Activated T-helper 2 cell treated with anti-CD3 and anti-CD28 coated beads, Interferon-gamma antibody, Interleukin-2, Interleukin-4, amounts not matched to agents 10 μg/mL and 5 μg/mL and 100 μg/mL, durations not matched to agents 14 hours and 24 hours and 36 hours (primary cell): ENCODE measurements at regions of chr20 and their contacts with region 1.

Region 1: DNA sequence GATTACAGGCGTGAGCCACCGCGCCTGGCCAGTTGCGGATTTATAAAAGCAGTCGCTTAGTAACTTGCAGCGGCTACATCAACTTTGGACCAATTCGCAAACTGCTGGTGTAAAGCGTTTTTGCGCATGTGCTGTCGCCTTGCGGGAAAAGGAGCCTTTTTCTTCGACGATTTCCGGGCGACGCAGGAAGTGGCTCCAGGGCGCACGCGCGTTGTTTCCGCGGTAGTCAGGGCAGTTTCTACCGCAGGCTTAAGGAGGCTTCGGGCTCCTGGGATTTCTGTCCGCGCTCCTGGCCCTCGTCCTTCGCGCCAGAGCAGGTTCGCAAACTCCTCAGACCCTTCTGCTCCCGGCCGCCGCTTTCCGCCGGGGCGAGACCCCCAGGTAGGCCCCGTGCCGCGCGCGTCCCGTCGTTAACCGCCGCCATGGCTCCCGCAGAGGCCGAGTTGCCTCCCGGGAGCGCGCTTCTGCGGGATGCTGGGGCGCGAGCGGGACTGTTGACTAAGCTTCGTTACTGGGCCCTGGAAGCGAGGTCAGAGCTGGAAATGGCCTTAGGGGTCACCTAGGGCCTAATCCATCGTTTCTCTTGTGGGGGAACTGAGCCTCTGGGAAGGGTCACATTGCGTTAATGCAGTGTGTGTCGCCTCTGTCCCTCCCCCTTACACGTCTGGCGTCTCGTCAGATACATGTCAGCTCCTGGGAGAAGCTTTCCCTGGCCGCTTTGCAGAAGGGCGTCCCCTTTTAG is at the start of gene RAE1:
- DNase-seq: peak; percentile 89
- H3K4me3 Mint-ChIP-seq: peak within 1 kb of the TSS; percentile 93
- H3K27ac Mint-ChIP-seq: peak within 1 kb of the TSS; percentile 93
- H3K4me1 Mint-ChIP-seq: peaks cover 24% of the 10 kb centered on the region
- H3K27me3 Mint-ChIP-seq: peaks cover 8% of the 10 kb centered on the region
- total RNA-seq, gene RAE1: 46.8 and 48.1 TPM in 2 replicates

Region 2: DNA sequence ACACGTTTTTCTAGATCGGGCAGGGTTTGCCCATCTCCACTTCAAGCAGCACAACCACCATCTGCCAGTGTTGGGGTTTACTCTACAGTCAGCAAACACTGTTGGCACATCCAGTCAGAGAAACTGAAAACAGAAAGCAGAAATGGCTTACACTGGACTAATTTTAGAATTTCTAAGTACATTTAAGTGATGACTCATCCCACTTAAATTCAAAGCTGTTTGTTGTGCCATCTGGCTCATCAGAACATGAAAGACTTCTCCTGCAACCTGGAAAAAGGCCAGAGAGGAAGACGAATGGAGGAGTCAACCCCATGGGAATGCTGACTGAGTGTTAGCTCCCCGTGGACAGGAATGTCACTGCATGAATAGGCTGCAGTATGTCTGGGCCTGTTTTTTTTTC is 796.3 kb before region 1 on chr20:
- intact Hi-C with region 1: loop called (anchors 10 kb)
- DNase-seq: no peak
- H3K4me3 Mint-ChIP-seq: no peak overlapping the region
- H3K27ac Mint-ChIP-seq: no peak overlapping the region
- H3K4me1 Mint-ChIP-seq: peaks cover 8% of the 10 kb centered on the region
- H3K27me3 Mint-ChIP-seq: peaks cover 3% of the 10 kb centered on the region

Region 3: DNA sequence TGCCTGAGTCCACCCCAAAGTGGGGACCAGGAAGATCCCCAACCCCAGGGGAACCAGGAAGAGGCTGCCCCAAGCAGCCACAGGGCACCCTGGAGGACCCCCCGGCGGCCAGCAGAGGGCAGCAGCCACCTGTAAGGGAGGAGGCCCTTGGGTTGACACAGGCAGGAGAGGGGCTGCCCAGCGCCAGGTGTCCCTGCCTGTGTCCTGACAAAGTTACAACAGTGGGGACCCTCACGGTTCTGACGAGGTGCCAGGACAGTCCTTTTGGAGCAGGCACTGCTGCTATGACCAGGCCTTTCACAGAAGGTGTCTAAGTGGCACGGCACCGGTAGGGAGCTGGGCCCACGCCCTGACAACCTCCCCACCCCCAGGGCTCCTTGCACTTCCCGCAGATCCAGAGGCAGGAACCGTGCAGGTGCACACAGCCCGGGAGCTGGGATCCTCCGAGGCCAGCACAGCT is 261.5 kb before region 1 on chr20:
- intact Hi-C with region 1: loop called (anchors 1 kb)
- DNase-seq: peak; percentile 47
- H3K4me3 Mint-ChIP-seq: no peak overlapping the region
- H3K27ac Mint-ChIP-seq: no peak overlapping the region
- H3K4me1 Mint-ChIP-seq: peaks cover 10% of the 10 kb centered on the region
- H3K27me3 Mint-ChIP-seq: peaks cover 3% of the 10 kb centered on the region

Region 4: DNA sequence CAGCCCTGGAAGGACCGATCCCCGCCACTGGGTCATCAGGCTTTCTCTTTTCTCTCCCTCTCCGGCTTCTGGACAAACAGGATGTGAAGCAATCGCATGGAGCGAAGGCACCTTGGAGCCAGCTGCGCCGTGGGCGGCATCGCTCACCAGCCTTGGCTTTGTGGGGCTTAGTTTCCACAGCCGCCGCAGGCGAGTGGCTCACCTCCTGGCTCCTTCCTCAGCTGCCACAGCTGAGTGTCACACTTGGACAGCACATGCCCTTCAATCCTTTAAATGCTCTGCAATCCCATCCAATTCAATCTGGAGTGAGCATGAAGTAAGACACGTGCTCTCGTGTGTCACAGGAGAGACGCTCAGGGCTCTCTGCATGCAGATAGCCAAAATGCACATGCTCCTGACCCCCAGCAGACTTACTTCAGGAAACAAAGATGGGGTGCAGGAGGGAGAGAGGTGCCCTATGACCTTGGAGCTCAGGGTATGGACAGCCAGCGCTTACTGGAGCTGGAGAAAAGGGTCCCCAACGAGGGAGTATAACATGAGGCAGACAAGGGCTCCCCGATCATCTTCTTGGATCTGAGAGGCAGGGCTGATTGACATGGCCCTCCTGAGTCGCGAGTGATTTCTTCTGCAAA is 155.6 kb before region 1 on chr20:
- intact Hi-C with region 1: no loop called
- DNase-seq: no peak
- H3K4me3 Mint-ChIP-seq: no peak overlapping the region
- H3K27ac Mint-ChIP-seq: no peak overlapping the region
- H3K4me1 Mint-ChIP-seq: no peaks in the 10 kb centered on the region
- H3K27me3 Mint-ChIP-seq: no peaks in the 10 kb centered on the region

Region 5: GRCh38 chr20:57361212-57361915 is 10.2 kb after region 1 on chr20:
- intact Hi-C with region 1: no loop called
- DNase-seq: no peak
- H3K4me3 Mint-ChIP-seq: no peak overlapping the region
- H3K27ac Mint-ChIP-seq: no peak overlapping the region
- H3K4me1 Mint-ChIP-seq: peaks cover 2% of the 10 kb centered on the region
- H3K27me3 Mint-ChIP-seq: no peaks in the 10 kb centered on the region

Region 6: GRCh38 chr20:57383447-57384347 is 32.5 kb after region 1 on chr20:
- intact Hi-C with region 1: loop called (anchors 2 kb)
- DNase-seq: no peak
- H3K4me3 Mint-ChIP-seq: no peak overlapping the region
- H3K27ac Mint-ChIP-seq: no peak overlapping the region
- H3K4me1 Mint-ChIP-seq: peaks cover 35% of the 10 kb centered on the region
- H3K27me3 Mint-ChIP-seq: no peaks in the 10 kb centered on the region

Region 7: DNA sequence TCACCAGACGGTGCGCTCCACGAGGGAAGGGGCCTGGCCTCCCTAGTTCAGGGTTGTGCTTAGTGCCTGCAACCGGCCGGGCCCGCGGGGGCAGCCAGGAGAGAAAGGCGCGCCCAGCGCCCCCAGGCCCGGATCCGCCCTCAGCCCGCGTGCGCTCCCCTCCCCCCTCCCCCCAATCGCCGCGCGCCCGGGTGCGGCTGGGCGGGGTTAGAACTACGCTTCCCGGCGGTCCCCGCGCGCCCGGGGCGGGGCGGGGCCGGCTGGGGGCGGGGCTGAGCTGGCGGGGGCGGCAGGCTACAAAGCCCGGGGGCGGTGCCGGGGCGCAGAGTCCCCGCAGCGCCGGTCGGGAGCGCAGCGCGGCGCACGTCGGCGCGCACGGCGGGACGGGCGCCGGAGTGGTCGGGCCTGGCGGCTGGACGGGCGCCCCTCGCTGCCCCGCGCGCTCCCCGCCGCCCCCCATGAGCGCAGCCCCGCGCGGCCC is 39.9 kb after region 1 on chr20 and contains the start of gene RBM38:
- intact Hi-C with region 1: loop called (anchors 1 kb)
- DNase-seq: peak; percentile 74
- H3K4me3 Mint-ChIP-seq: peak within 1 kb of the TSS; percentile 91
- H3K27ac Mint-ChIP-seq: peak within 1 kb of the TSS; percentile 98
- H3K4me1 Mint-ChIP-seq: peaks cover 30% of the 10 kb centered on the region
- H3K27me3 Mint-ChIP-seq: no peaks in the 10 kb centered on the region
- total RNA-seq, gene RBM38: 88.9 and 89.5 TPM in 2 replicates